BJ (cell line): ENCODE measurements at regions of chr16 and their contacts with region 1.

Region 1: DNA sequence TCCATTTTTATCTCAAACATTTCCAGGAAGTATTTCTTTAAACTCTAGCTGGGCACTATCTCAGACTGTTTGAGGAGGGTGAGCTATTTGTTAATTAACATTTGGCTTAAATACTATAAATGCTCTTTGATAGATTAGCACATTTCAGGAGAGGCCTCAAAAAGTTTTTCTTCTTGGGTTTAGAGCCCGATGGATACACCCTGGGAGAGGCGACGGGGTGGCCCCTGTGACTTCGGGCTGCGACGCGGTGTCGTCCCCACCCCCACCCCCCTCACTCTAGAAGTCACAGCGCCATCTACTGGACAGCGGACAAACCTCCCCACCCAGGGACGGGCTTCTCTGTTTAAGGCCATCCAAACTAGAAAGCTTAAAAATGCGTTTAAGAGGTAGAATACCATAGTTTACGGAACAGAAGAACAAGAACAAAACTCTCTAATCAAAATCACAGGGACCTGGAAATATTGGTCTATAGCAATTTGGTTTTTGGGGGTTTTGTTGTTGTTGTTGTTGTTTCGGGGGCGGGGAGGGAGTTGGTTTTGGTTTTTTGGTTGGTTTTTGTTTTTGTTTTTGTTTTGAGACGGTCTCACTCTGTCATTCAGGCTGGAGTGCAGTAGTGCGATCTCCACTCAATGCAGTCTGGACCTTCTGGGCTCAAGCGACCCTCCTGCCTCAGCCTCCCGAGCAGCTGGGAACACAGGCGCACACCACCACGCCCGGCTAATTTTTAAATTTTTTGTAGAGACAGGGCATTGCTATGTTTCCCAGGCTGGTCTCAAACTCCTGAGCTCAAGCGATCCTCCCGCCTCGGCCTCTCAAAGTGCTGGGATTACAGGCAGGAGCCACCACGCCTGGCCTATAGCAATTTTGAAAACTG is 254.4 kb downstream of the C16orf95 start:
- DNase-seq: no peak
- H3K4me3 ChIP-seq: no peak overlapping the region
- H3K27me3 ChIP-seq: no peaks in the 10 kb centered on the region
- CTCF ChIP-seq: peak; percentile 86

Region 2: GRCh38 chr16:86558355-86559193 is 504.2 kb before region 1 on chr16:
- CTCF ChIA-PET with region 1: interaction called, 117 read pairs
- POLR2A ChIA-PET with region 1: no interaction called
- DNase-seq: no peak
- H3K4me3 ChIP-seq: no peak overlapping the region
- H3K27me3 ChIP-seq: no peaks in the 10 kb centered on the region
- CTCF ChIP-seq: no peak

Region 3: GRCh38 chr16:86570558-86571529 is 492.0 kb before region 1 on chr16:
- CTCF ChIA-PET with region 1: interaction called, 19 read pairs
- POLR2A ChIA-PET with region 1: no interaction called
- DNase-seq: no peak
- H3K4me3 ChIP-seq: peak overlapping the region; percentile 83
- H3K27me3 ChIP-seq: peaks cover 3% of the 10 kb centered on the region
- CTCF ChIP-seq: no peak

Region 4: DNA sequence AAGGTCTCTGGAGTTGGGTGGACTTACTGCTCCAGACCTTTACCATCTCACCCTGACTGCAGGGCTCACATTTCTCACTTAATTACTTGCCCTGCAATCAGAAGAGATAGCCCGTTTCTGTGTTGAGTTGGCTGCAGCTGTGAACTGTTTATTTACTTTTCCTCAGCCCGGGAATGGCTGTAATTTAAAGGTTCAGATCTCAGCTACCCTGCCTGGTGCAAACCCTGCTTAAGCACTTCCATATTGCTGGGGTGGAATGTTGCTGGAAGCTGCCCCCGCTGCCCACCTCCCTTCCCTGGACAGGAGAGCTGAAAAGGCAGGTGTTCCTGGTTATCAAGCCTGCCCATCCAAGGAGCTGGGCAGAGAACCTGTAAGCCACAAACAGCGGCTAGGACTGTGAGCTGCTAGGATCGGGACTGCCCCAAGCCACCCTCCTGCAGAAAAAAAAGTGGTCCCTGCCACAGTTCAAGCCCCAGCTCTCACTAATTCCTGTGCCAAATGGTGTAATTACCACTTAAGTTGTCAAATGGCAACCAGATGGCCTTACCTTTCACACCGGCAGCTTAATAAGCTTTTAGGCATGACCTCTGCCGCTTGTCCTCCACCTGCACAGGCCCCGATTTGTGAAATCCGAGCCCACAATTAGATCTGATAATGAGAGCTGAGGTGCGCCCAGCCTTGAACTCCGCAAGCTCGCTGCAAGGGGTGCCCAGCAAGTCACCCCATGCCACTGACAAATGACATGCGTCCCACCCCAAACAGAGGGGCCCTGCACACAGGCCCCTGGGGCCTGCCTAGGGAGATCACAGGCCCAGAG is 15.4 kb before region 1 on chr16:
- CTCF ChIA-PET with region 1: interaction called, 34 read pairs
- POLR2A ChIA-PET with region 1: no interaction called
- DNase-seq: no peak
- H3K4me3 ChIP-seq: no peak overlapping the region
- H3K27me3 ChIP-seq: peaks cover 21% of the 10 kb centered on the region
- CTCF ChIP-seq: no peak

Region 5: GRCh38 chr16:87145181-87146176 is 82.7 kb after region 1 on chr16:
- CTCF ChIA-PET with region 1: no interaction called
- POLR2A ChIA-PET with region 1: no interaction called
- DNase-seq: peak; percentile 15
- H3K4me3 ChIP-seq: no peak overlapping the region
- H3K27me3 ChIP-seq: no peaks in the 10 kb centered on the region
- CTCF ChIP-seq: no peak

Region 6: GRCh38 chr16:87278191-87279095 is 215.6 kb after region 1 on chr16:
- CTCF ChIA-PET with region 1: interaction called, 45 read pairs
- POLR2A ChIA-PET with region 1: no interaction called
- DNase-seq: peak; percentile 19
- H3K4me3 ChIP-seq: no peak overlapping the region
- H3K27me3 ChIP-seq: no peaks in the 10 kb centered on the region
- CTCF ChIP-seq: peak; percentile 96